Activated CD4-positive, alpha-beta T cell treated with anti-CD3 and anti-CD28 coated beads for 36 hours (primary cell): ENCODE measurements at regions of chrX and their contacts with region 1.

Region 1: GRCh38 chrX:150693775-150694574 is 779 bp downstream of the MTMR1 start:
- DNase-seq: peak; percentile 86
- ATAC-seq: peak; percentile 25
- H3K4me3 Mint-ChIP-seq: peak overlapping the region; percentile 88
- H3K27ac Mint-ChIP-seq: peak overlapping the region; percentile 98
- H3K4me1 Mint-ChIP-seq: peaks cover 61% of the 10 kb centered on the region
- H3K27me3 Mint-ChIP-seq: no peaks in the 10 kb centered on the region

Region 2: GRCh38 chrX:149527705-149528104 is 1166.3 kb before region 1 on chrX:
- CTCF ChIA-PET with region 1: no interaction called
- POLR2A ChIA-PET with region 1: no interaction called
- intact Hi-C with region 1: loop called in 1 of 2 experiments (anchors 5 kb)
- DNase-seq: peak; percentile 43
- ATAC-seq: peak; percentile 48
- H3K4me3 Mint-ChIP-seq: no peak overlapping the region
- H3K27ac Mint-ChIP-seq: peak overlapping the region; percentile 56
- H3K4me1 Mint-ChIP-seq: peaks cover 35% of the 10 kb centered on the region
- H3K27me3 Mint-ChIP-seq: no peaks in the 10 kb centered on the region

Region 3: DNA sequence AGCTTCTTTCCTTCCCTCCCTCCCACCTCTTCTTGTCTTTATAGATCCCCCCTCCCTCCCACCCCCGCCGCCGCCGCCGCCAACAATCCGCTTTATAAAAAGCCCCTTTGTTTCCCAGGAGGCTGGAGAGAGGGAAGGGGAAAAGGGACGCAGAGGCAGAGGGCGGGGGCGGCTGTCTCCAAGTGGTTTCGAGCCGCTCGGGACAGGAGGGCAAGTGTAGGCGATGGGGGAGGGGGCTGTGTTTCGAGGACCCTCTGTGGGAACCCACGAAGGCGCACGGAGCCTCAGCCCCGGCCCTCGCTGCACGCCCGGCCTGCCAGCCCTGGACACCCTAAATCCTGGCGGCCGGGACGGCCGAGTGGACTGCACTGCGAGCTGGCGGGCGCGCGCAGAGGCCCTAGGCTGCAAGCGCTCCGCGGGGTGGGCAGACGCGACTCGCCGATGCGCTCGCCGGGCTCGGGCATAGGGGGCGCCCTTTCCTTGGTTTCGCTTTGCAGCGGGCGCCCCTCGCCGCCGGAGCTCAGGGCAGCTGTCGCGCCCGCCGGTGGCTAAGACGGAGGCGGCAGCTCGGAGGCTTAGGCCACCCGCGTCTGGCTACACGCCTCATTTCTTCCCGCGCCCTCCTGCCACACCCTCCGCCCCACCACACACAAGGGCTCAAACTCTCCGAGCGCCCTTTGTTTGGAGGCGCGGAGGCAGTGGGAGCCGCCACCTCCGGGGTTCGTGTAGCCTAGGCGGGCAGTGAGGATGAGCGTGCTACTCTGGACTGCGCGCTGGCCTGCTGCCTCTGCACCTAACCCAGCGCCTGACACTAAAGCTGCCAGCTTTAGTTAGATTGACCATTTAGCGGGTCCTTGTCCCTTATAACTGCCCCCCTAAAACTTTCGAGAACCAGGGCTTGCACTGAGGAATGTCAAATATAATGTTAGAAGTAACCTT is 328.7 kb before region 1 on chrX:
- CTCF ChIA-PET with region 1: no interaction called
- POLR2A ChIA-PET with region 1: no interaction called
- intact Hi-C with region 1: loop called (anchors 5 to 10 kb)
- DNase-seq: peak; percentile 79
- ATAC-seq: peak; percentile 48
- H3K4me3 Mint-ChIP-seq: peak overlapping the region; percentile 74
- H3K27ac Mint-ChIP-seq: no peak overlapping the region
- H3K4me1 Mint-ChIP-seq: peaks cover 22% of the 10 kb centered on the region
- H3K27me3 Mint-ChIP-seq: peaks cover 10% of the 10 kb centered on the region

Region 4: GRCh38 chrX:150575416-150575808 is 118.6 kb before region 1 on chrX:
- CTCF ChIA-PET with region 1: interaction called, 5 read pairs
- POLR2A ChIA-PET with region 1: interaction called, 7 read pairs
- intact Hi-C with region 1: loop called (anchors 1 to 2 kb)
- DNase-seq: peak; percentile 80
- ATAC-seq: peak; percentile 71
- H3K4me3 Mint-ChIP-seq: peak overlapping the region; percentile 58
- H3K27ac Mint-ChIP-seq: peak overlapping the region; percentile 93
- H3K4me1 Mint-ChIP-seq: peaks cover 83% of the 10 kb centered on the region
- H3K27me3 Mint-ChIP-seq: no peaks in the 10 kb centered on the region

Region 5: DNA sequence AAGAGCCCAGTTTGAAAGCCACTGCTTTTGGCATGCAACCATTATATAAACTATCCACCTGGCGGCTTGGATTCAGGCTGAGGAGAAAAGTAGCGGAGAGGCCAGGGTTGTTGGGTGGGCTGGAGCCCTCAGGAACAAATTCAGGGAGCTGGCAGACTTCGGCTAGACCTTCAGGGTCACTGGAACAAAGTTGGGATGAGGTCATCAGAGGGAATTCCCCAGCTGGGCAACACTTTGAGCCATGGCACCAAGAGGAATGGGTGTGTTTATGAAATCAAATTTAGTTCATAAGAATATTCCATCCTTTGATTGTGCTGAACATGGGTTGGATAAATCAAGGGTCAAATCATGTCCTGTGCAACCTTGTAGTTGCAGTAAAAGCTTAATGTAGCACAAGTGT is 21.2 kb after region 1 on chrX:
- CTCF ChIA-PET with region 1: interaction called, 12 read pairs
- POLR2A ChIA-PET with region 1: interaction called, 5 read pairs
- intact Hi-C with region 1: no loop called
- DNase-seq: no peak
- ATAC-seq: no peak
- H3K4me3 Mint-ChIP-seq: no peak overlapping the region
- H3K27ac Mint-ChIP-seq: peak overlapping the region; percentile 47
- H3K4me1 Mint-ChIP-seq: peaks cover 29% of the 10 kb centered on the region
- H3K27me3 Mint-ChIP-seq: no peaks in the 10 kb centered on the region

Region 6: DNA sequence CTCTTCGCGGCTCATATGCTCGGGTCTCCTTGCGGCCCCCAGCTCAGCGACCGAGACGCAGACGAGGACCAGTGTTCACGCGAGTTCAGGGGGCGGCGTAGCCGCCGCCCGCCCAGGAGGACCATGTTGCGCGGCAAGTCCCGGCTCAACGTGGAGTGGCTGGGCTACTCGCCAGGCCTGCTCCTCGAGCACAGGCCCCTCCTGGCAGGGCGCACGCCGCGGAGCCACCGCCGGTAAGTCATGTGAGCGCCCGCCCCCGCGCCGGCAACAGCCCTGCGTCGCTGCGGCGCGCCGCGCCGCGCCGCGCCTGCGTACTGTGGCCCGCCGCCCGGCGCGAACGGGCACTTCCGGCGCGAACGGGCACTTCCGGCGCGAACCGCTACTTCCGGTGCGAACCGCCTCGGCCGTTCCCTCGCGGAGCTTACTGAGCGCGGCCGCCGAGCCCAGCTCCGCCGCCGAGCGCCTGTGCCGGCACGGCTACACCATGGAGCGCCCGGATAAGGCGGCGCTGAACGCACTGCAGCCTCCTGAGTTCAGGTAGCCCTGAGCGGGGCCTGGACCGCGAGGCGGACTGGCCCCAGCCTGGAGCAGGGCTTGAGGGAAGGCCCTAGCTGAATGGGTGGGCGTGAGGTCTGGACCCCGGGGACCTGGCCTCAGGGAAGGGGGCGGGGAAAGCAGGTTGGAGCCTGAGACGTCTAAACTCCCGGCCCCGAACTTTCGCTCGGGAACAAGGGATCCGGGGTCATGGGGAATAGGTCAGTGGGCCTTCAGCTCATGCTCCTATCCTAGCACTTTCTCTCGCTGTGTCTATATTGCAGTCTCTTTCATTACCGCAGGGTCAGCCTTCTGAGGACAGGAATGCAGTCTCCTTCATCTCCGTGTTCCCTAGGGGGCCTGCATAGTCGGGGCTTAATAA is 703.1 kb after region 1 on chrX and contains the start of gene VMA21:
- CTCF ChIA-PET with region 1: no interaction called
- POLR2A ChIA-PET with region 1: no interaction called
- intact Hi-C with region 1: loop called in 1 of 2 experiments (anchors 2 kb)
- DNase-seq: peak; percentile 90
- ATAC-seq: peak; percentile 80
- H3K4me3 Mint-ChIP-seq: peak within 1 kb of the TSS; percentile 84
- H3K27ac Mint-ChIP-seq: peak within 1 kb of the TSS; percentile 94
- H3K4me1 Mint-ChIP-seq: peaks cover 49% of the 10 kb centered on the region
- H3K27me3 Mint-ChIP-seq: no peaks in the 10 kb centered on the region
- total RNA-seq, gene VMA21: 42.1 to 43.0 TPM